Gastrocnemius medialis (tissue), 4 donors: ENCODE measurements at regions of chr11 and their contacts with region 1.

Region 1: DNA sequence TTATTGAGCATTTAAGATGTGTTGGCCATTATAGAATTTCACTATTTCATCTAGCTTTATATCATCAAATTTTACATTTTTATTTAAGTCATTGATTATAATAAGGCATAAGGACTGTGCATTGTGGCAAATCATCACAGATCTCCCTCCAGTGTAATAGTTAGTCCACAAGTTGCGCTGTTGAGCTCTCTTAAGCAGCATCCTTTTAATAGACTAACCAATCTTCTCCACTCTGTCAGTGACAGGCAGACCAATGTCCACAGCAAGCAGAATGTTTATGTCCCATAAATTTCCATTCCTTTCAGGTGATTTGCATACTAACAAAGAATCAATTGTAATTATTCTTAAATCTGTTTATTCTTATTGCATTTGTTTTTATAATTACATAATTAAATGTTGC is 595.3 kb upstream of the CCDC90B start:
- DNase-seq: no peak
- ATAC-seq: no peak
- H3K4me3 ChIP-seq: no peak overlapping the region
- H3K27ac ChIP-seq: no peak overlapping the region
- H3K4me1 ChIP-seq: no peaks in the 10 kb centered on the region
- H3K27me3 ChIP-seq: no peaks in the 10 kb centered on the region
- CTCF ChIP-seq: no peak
- POLR2A ChIP-seq: no peak

Region 2: GRCh38 chr11:83778598-83778997 is 102.8 kb before region 1 on chr11:
- in situ Hi-C with region 1: loop called in 1 of 4 experiments (anchors 25 kb)
- intact Hi-C with region 1: no loop called
- DNase-seq: no peak
- ATAC-seq: no peak
- H3K4me3 ChIP-seq: no peak overlapping the region
- H3K27ac ChIP-seq: no peak overlapping the region
- H3K4me1 ChIP-seq: no peaks in the 10 kb centered on the region
- H3K27me3 ChIP-seq: no peaks in the 10 kb centered on the region
- CTCF ChIP-seq: no peak
- POLR2A ChIP-seq: no peak

Region 3: DNA sequence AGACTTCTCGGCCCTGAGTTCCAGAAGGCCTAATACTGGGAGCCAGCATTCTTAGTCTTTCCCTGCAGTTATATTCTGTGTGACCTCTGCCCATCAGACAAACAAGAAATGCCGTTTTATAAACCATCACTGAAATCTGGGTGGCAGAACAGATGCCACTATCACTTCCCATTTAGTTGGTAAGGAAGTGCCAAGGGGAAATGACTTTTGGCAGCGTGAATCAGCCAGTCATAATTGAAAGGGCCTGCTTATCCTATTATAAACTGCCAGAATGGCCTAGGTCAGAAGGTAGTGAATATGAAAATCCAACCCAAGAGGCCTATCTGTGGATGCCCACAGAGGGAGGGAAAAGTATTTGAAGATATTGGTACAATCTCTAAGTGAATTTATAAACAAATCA is 51.6 kb after region 1 on chr11:
- in situ Hi-C with region 1: no loop called
- intact Hi-C with region 1: no loop called
- DNase-seq: no peak
- ATAC-seq: no peak
- H3K4me3 ChIP-seq: no peak overlapping the region
- H3K27ac ChIP-seq: no peak overlapping the region
- H3K4me1 ChIP-seq: no peaks in the 10 kb centered on the region
- H3K27me3 ChIP-seq: no peaks in the 10 kb centered on the region
- CTCF ChIP-seq: no peak
- POLR2A ChIP-seq: no peak